GM10248 (cell line): ENCODE measurements at regions of chr11 and their contacts with region 1.

Region 1: DNA sequence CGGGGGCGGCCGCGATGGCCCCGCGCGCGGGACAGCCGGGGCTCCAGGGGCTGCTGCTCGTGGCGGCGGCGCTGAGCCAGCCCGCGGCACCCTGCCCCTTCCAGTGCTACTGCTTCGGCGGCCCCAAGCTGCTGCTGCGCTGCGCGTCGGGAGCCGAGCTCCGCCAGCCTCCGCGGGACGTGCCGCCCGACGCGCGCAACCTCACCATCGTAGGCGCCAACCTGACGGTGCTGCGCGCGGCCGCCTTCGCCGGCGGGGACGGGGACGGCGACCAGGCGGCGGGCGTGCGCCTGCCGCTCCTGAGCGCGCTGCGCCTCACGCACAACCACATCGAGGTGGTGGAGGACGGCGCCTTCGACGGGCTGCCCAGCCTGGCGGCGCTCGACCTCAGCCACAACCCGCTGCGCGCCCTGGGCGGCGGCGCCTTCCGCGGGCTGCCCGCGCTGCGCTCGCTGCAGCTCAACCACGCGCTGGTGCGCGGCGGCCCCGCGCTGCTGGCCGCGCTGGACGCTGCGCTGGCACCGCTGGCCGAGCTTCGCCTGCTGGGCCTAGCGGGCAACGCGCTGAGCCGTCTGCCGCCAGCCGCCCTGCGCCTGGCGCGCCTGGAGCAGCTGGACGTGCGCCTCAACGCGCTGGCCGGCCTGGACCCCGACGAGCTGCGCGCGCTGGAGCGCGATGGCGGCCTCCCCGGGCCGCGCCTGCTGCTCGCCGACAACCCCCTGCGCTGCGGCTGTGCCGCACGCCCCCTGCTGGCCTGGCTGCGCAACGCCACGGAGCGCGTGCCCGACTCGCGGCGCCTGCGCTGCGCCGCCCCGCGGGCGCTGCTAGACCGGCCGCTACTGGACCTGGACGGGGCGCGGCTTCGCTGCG is 697 bp downstream of the TPBGL start:
- DNase-seq: peak; percentile 95
- CTCF ChIP-seq: peak; percentile 99

Region 2: GRCh38 chr11:74929431-74930363 is 311.6 kb before region 1 on chr11:
- CTCF ChIA-PET with region 1: interaction called, 24 read pairs
- POLR2A ChIA-PET with region 1: no interaction called
- DNase-seq: peak; percentile 54
- CTCF ChIP-seq: peak; percentile 90

Region 3: GRCh38 chr11:75195121-75195551 is 46.1 kb before region 1 on chr11:
- CTCF ChIA-PET with region 1: interaction called, 12 read pairs
- POLR2A ChIA-PET with region 1: no interaction called
- DNase-seq: no peak
- CTCF ChIP-seq: no peak

Region 4: GRCh38 chr11:75214411-75214821 is 26.9 kb before region 1 on chr11:
- CTCF ChIA-PET with region 1: interaction called, 11 read pairs
- POLR2A ChIA-PET with region 1: no interaction called
- DNase-seq: peak; percentile 74
- CTCF ChIP-seq: no peak

Region 5: DNA sequence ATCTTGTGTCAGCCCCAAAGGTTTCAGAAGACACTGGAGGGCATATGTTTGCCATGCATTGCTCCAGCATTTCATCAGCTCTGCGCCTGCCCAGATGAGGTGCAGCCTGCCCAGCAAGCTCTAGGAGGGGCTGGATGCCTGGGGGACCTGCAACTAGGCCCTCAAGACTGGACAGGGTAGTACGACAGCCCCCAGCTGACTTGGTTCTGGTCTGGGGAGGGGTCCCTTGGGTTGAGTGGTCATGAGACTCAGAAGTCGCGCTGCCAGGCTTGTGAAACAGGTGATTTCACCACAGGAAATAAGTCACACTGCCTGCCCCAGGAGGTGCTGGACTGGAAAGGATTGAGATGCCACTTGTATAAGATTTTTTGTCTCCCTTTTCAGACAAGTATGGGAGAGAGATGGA is 22.7 kb after region 1 on chr11:
- CTCF ChIA-PET with region 1: interaction called, 19 read pairs
- POLR2A ChIA-PET with region 1: no interaction called
- DNase-seq: no peak
- CTCF ChIP-seq: no peak

Region 6: GRCh38 chr11:75399344-75400145 is 158.3 kb after region 1 on chr11 and contains the start of gene RPS3:
- CTCF ChIA-PET with region 1: no interaction called
- POLR2A ChIA-PET with region 1: no interaction called
- DNase-seq: peak; percentile 93
- CTCF ChIP-seq: peak; percentile 13